Heart left ventricle (tissue), 16 donors: ENCODE measurements at regions of chr9 and their contacts with region 1.

Region 1: DNA sequence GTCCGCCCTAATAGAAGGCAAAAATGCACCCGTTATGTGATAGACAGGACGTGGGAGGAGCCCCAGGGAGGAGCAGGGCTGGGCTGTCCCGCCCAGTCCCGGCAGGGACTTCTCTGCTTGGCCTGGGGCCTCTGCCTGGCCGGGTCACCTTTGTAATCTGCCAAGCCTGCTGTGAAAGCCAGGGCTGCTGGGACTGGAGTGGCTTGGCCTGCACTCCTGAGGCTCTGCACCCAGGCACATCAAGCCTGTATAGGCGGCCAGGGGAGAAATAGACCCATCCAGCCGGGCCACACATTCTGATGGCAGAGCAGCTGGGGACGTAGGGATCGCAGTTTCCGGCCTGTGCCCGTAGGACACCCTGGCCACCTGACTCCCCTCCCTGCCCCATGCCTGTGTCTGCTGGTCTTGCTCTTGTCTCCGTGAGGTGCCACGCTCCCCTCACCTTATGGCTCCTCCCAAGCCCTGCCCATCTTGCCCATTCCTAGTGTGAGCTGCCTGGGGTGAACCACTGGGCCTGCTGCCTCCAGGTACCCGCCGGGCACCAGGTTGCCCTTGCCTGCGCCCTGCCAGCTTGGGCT is 28.1 kb downstream of the DYNC2I2 start:
- DNase-seq: peak; percentile 78 to 90 (median 82)
- ATAC-seq: peak; percentile 90 to 96 (median 94)
- H3K4me3 ChIP-seq: no peak overlapping the region
- H3K27ac ChIP-seq: peak overlapping the region in 11 of 12 donors; percentile 40 to 86 (median 69)
- H3K4me1 ChIP-seq: peaks cover 0 to 36% (median 16%) of the 10 kb centered on the region in 12 donors
- H3K27me3 ChIP-seq: no peaks in the 10 kb centered on the region
- CTCF ChIP-seq: no peak
- POLR2A ChIP-seq: no peak

Region 2: GRCh38 chr9:128191406-128192046 is 437.0 kb before region 1 on chr9 and contains the start of gene CIZ1:
- intact Hi-C with region 1: loop called in 1 of 10 experiments (anchors 5 kb)
- DNase-seq: peak; percentile 79 to 91 (median 84)
- ATAC-seq: peak; percentile 59 to 94 (median 90)
- H3K4me3 ChIP-seq: peak within 1 kb of the TSS; percentile 72 to 98 (median 90)
- H3K27ac ChIP-seq: peak within 1 kb of the TSS; percentile 62 to 93 (median 90)
- H3K4me1 ChIP-seq: peaks cover 7 to 31% (median 18%) of the 10 kb centered on the region in 12 donors
- H3K27me3 ChIP-seq: no peaks in the 10 kb centered on the region
- CTCF ChIP-seq: peak; percentile 54 to 98 (median 84)
- POLR2A ChIP-seq: peak in 1 of 2 donors; percentile 57
- total RNA-seq, gene CIZ1: 42.6 to 101 (median 79.3) TPM